ENCODE measurements at regions of chr17 and their contacts with region 1.

Region 1: GRCh38 chr17:76506408-76507349 is 5.5 kb upstream of the RHBDF2 start:
- DNase-seq: peak; percentile 95

Region 2: GRCh38 chr17:76408052-76408849 is 98.4 kb before region 1 on chr17:
- intact Hi-C with region 1: loop called in 1 of 2 experiments (anchors 5 kb)
- DNase-seq: peak; percentile 83

Region 3: GRCh38 chr17:76432712-76433336 is 73.9 kb before region 1 on chr17:
- intact Hi-C with region 1: no loop called
- DNase-seq: no peak

Region 4: GRCh38 chr17:76467366-76467765 is 39.3 kb before region 1 on chr17 and contains the start of gene AANAT:
- intact Hi-C with region 1: loop called (anchors 2 kb)
- DNase-seq: no peak
- total RNA-seq, gene AANAT: not detected

Region 5: GRCh38 chr17:76714822-76715495 is 208.3 kb after region 1 on chr17:
- intact Hi-C with region 1: no loop called
- DNase-seq: peak; percentile 89

Measured in posterior vena cava (tissue), 2 donors.